ENCODE measurements at regions of chr6 and their contacts with region 1.

Region 1: GRCh38 chr6:159693128-159693893 is at the start of gene SOD2:
- DNase-seq: peak; percentile 67 to 92 (median 81)
- ATAC-seq: peak; percentile 77
- H3K4me3 ChIP-seq: peak within 1 kb of the TSS; percentile 54 to 78
- H3K4me3 Mint-ChIP-seq: peak within 1 kb of the TSS; percentile 96
- H3K27ac ChIP-seq: peak within 1 kb of the TSS; percentile 67 to 85
- H3K27ac Mint-ChIP-seq: peak within 1 kb of the TSS; percentile 97
- H3K4me1 ChIP-seq: peaks cover 28% of the 10 kb centered on the region
- H3K4me1 Mint-ChIP-seq: peaks cover 39% of the 10 kb centered on the region
- H3K27me3 ChIP-seq: no peaks in the 10 kb centered on the region
- H3K27me3 Mint-ChIP-seq: no peaks in the 10 kb centered on the region
- CTCF ChIP-seq: no peak
- total RNA-seq, gene SOD2: 99.1 to 99.6 TPM

Region 2: GRCh38 chr6:159169193-159169555 is 524.1 kb before region 1 on chr6 and contains the start of gene FNDC1:
- CTCF ChIA-PET with region 1: no interaction called
- POLR2A ChIA-PET with region 1: no interaction called
- intact Hi-C with region 1: no loop called
- DNase-seq: peak in 3 of 9 experiments; percentile 23 to 55 (median 52)
- ATAC-seq: peak; percentile 66
- H3K4me3 ChIP-seq: peak within 1 kb of the TSS in 1 of 2 experiments; percentile 13
- H3K4me3 Mint-ChIP-seq: peak within 1 kb of the TSS; percentile 67
- H3K27ac ChIP-seq: no peak within 1 kb of the TSS
- H3K27ac Mint-ChIP-seq: no peak within 1 kb of the TSS
- H3K4me1 ChIP-seq: no peaks in the 10 kb centered on the region
- H3K4me1 Mint-ChIP-seq: peaks cover 15% of the 10 kb centered on the region
- H3K27me3 ChIP-seq: peaks cover 11 to 13% of the 10 kb centered on the region in 2 experiments
- H3K27me3 Mint-ChIP-seq: peaks cover 76% of the 10 kb centered on the region
- CTCF ChIP-seq: no peak
- total RNA-seq, gene FNDC1: not detected

Region 3: DNA sequence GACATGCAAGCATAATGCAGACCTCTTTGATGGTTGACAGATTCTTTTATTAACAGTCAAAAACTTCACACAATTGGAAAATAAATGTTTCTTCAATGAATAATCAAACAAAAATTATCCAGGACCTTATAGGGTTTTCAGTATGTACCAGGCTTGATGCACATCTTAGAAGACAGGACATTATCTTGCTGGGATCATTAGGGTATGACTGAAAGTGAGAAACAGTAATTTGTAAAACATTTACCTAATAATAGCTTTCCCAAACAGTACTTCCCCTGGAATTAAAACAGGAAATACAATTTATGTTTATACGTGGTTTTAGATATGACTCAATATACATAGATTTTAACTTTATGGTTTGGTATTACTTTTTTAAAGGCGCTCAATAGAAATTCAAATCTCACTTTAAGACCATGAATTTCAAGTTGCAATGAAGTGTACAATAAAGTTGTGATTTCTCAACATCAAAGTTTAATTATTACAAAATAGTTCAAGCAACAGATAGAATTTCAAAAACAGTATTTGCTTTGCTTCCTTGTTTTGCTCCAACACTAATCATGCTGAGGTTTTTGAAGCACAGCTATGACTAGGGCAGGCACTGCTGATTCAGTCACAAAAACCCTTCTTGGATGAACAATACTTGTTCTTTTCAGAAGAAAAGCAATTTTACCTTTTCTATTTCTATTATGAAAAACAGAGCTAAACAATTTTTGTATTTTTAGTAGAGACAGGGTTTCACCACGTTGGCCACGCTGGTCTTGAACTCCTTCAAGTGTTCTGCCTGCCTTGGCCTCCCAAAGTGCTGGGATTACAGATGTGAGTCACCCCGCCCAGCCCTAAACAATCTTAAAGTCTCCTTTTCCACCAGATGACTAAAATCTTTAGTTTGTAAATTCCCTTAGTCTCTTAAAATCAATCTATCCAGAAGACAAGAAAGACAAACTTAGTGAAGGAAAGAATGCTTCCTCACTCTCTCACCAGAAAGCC is 13.9 kb before region 1 on chr6:
- CTCF ChIA-PET with region 1: interaction called, 12 read pairs
- POLR2A ChIA-PET with region 1: interaction called, 4 read pairs
- intact Hi-C with region 1: no loop called
- DNase-seq: no peak
- ATAC-seq: no peak
- H3K4me3 ChIP-seq: no peak overlapping the region
- H3K4me3 Mint-ChIP-seq: no peak overlapping the region
- H3K27ac ChIP-seq: no peak overlapping the region
- H3K27ac Mint-ChIP-seq: no peak overlapping the region
- H3K4me1 ChIP-seq: no peaks in the 10 kb centered on the region
- H3K4me1 Mint-ChIP-seq: peaks cover 8% of the 10 kb centered on the region
- H3K27me3 ChIP-seq: no peaks in the 10 kb centered on the region
- H3K27me3 Mint-ChIP-seq: no peaks in the 10 kb centered on the region
- CTCF ChIP-seq: no peak

Region 4: DNA sequence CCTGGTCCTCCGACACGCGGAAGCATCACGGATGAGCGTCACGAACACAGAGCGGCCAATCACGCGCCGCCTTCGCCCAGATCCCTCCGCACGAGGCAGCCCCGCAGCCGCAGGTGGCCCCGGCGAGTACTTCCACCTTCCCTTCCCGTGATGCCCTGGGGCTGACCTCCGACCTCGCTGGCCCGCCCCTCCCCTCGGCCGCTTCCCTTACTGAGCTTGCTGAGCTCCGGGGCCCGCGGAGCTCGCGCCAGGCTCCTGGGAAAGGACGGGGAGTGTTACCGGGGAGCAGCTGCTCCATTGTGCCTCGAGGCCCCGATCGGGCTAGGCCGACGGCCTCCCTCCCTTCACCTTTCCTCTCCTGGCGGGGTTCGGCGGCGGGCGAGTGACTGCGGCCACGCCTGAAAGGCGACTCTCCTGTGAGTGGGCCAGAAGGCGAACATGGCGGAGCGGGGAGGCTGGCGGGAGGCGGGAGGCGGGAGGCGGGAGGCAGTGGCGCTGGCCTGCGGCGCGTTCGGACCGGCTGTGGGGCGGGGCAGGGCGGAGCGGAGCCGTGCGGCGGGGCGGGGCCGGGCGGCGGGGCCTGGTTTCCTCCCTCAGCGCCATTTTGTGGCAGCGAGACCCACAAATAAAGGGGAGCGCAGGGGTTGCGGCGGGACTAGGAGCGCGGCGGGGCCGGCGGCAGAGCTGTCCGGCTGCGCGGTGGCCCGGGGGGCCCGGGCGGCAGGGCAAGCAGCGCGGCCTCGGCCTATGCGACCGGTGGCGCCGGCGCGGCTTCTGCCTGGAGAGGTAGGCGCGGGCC is 33.8 kb after region 1 on chr6 and contains the start of gene WTAP:
- CTCF ChIA-PET with region 1: interaction called, 11 read pairs
- POLR2A ChIA-PET with region 1: interaction called, 35 read pairs
- intact Hi-C with region 1: loop called (anchors 1 kb)
- DNase-seq: peak; percentile 94 to 99 (median 97)
- ATAC-seq: peak; percentile 88
- H3K4me3 ChIP-seq: peak within 1 kb of the TSS; percentile 88 to 94
- H3K4me3 Mint-ChIP-seq: peak within 1 kb of the TSS; percentile 88
- H3K27ac ChIP-seq: peak within 1 kb of the TSS; percentile 93 to 94
- H3K27ac Mint-ChIP-seq: peak within 1 kb of the TSS; percentile 99
- H3K4me1 ChIP-seq: peaks cover 51% of the 10 kb centered on the region
- H3K4me1 Mint-ChIP-seq: peaks cover 58% of the 10 kb centered on the region
- H3K27me3 ChIP-seq: no peaks in the 10 kb centered on the region
- H3K27me3 Mint-ChIP-seq: no peaks in the 10 kb centered on the region
- CTCF ChIP-seq: no peak
- total RNA-seq, gene WTAP: 224 to 226 TPM

Region 5: GRCh38 chr6:159789377-159790148 is 96.3 kb after region 1 on chr6 and contains the start of gene TCP1:
- CTCF ChIA-PET with region 1: interaction called, 18 read pairs
- POLR2A ChIA-PET with region 1: interaction called, 32 read pairs
- intact Hi-C with region 1: loop called (anchors 1 kb)
- DNase-seq: peak; percentile 96 to 100 (median 99)
- ATAC-seq: peak; percentile 81
- H3K4me3 ChIP-seq: peak within 1 kb of the TSS; percentile 86 to 99
- H3K4me3 Mint-ChIP-seq: peak within 1 kb of the TSS; percentile 99
- H3K27ac ChIP-seq: peak within 1 kb of the TSS; percentile 89 to 96
- H3K27ac Mint-ChIP-seq: peak within 1 kb of the TSS; percentile 98
- H3K4me1 ChIP-seq: peaks cover 57% of the 10 kb centered on the region
- H3K4me1 Mint-ChIP-seq: peaks cover 69% of the 10 kb centered on the region
- H3K27me3 ChIP-seq: no peaks in the 10 kb centered on the region
- H3K27me3 Mint-ChIP-seq: no peaks in the 10 kb centered on the region
- CTCF ChIP-seq: no peak
- total RNA-seq, gene TCP1: 221 to 222 TPM

Region 6: DNA sequence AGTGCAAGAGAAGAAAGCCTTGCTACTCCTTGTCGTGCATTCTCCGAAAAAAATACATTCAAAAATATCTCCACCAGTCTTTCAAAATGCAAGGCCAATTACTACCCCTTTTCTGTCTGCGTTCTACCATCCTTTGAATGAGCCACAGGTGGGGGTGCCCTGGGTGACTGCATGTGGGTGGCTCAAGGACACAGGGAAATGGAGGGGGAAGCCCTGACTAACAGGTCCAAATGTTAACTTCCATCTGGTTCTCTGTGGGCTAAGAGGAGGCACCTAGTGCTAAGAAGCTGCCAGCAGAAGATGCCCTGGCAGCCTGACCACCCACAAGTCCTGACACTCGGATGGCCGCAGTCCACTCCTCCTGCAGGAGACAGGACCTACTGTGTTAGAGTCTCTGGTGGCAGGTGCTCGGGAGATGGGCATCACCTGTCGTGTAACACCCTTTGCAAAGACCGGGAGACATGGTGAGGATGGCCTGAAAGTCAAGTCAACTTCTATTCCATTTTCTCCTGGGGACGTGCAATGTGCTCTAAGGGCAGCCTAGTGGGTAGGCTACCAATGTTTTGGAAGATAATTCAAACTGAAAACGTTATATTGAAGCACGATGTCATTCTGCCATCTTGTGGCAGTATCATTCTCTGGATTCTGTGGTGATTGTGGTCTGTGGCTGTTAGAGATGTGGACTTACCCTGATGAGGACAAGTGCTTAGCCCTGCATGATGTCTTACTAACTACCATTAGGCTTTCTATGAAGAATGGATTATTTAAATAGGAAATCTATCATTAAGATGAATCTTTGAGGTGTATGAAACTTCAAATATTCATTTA is 248.2 kb after region 1 on chr6:
- CTCF ChIA-PET with region 1: interaction called, 17 read pairs
- POLR2A ChIA-PET with region 1: no interaction called
- intact Hi-C with region 1: loop called (anchors 1 to 2 kb)
- DNase-seq: peak in 6 of 9 experiments; percentile 9 to 82 (median 23)
- ATAC-seq: peak; percentile 84
- H3K4me3 ChIP-seq: no peak overlapping the region
- H3K4me3 Mint-ChIP-seq: no peak overlapping the region
- H3K27ac ChIP-seq: no peak overlapping the region
- H3K27ac Mint-ChIP-seq: no peak overlapping the region
- H3K4me1 ChIP-seq: no peaks in the 10 kb centered on the region
- H3K4me1 Mint-ChIP-seq: peaks cover 3% of the 10 kb centered on the region
- H3K27me3 ChIP-seq: no peaks in the 10 kb centered on the region
- H3K27me3 Mint-ChIP-seq: no peaks in the 10 kb centered on the region
- CTCF ChIP-seq: peak; percentile 49

Region 7: DNA sequence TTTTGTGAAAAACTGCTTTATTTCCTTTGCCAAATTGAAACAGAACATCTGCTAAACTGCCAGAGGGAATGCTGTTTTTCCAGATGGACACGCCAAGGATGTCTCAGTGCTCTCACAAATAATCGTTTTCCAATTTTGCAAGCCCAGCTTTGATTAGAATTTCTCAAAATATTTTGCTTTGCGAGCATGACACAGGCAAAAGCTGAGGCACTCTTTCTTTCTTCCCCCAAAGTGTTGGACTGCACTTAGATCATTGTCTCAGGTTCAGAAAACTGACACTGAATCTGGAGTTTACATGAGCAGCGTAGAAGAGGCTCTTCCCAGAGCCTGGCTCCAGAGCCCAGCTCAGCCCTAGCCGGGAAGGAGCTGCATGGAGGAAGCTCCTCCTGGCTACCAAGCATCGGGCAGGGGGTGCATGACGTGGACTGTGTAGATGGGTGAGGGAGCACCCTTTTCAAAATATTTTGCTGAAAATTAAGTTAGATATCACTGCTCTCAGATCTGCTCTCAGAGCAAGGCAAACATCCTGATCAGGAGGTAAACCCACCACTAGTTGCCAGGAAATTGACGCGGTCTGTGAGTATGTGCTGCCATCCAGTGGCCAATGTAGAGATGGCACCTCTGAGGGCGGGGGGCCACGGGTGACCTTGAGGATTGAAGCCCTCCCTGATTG is 762.4 kb after region 1 on chr6:
- CTCF ChIA-PET with region 1: interaction called, 5 read pairs
- POLR2A ChIA-PET with region 1: no interaction called
- intact Hi-C with region 1: loop called in 1 of 2 experiments (anchors 1 kb)
- DNase-seq: peak; percentile 47 to 84 (median 71)
- ATAC-seq: peak; percentile 99
- H3K4me3 ChIP-seq: no peak overlapping the region
- H3K4me3 Mint-ChIP-seq: no peak overlapping the region
- H3K27ac ChIP-seq: no peak overlapping the region
- H3K27ac Mint-ChIP-seq: no peak overlapping the region
- H3K4me1 ChIP-seq: peaks cover 19% of the 10 kb centered on the region
- H3K4me1 Mint-ChIP-seq: peaks cover 36% of the 10 kb centered on the region
- H3K27me3 ChIP-seq: peaks cover 0 to 5% of the 10 kb centered on the region in 2 experiments
- H3K27me3 Mint-ChIP-seq: peaks cover 36% of the 10 kb centered on the region
- CTCF ChIP-seq: peak; percentile 94

Region 8: GRCh38 chr6:160992061-160992979 is 1299.0 kb after region 1 on chr6:
- CTCF ChIA-PET with region 1: no interaction called
- POLR2A ChIA-PET with region 1: no interaction called
- intact Hi-C with region 1: loop called in 1 of 2 experiments (anchors 5 kb)
- DNase-seq: peak in 8 of 9 experiments; percentile 11 to 75 (median 38)
- ATAC-seq: peak; percentile 64
- H3K4me3 ChIP-seq: peak overlapping the region; percentile 85 to 94
- H3K4me3 Mint-ChIP-seq: peak overlapping the region; percentile 96
- H3K27ac ChIP-seq: peak overlapping the region; percentile 78 to 82
- H3K27ac Mint-ChIP-seq: peak overlapping the region; percentile 90
- H3K4me1 ChIP-seq: peaks cover 32% of the 10 kb centered on the region
- H3K4me1 Mint-ChIP-seq: peaks cover 47% of the 10 kb centered on the region
- H3K27me3 ChIP-seq: no peaks in the 10 kb centered on the region
- H3K27me3 Mint-ChIP-seq: no peaks in the 10 kb centered on the region
- CTCF ChIP-seq: peak; percentile 49